MCF 10A (cell line): ENCODE measurements at regions of chr1 and their contacts with region 1.

Region 1: DNA sequence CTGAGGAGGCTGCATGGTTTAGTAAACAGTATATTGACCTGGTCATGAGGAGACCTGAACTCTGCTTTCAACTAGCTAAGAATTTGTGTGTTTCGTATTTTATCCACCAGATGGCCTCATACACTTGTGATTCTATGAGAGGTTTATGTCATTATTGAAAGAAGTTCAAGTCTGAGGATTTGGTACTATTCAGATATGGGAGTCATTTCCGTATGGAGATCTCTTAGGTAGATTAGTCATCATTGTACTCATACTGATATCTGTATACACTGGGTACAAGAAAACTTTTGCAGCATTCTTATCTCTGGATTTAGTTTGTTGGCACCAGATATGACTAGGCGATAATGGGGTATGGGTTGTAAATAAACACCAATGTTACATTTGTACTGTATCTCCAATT is 26.6 kb downstream of the ATF6 start:
- DNase-seq: peak; percentile 87
- H3K4me3 Mint-ChIP-seq: no peak overlapping the region
- H3K27ac Mint-ChIP-seq: no peak overlapping the region
- H3K4me1 Mint-ChIP-seq: peaks cover 18% of the 10 kb centered on the region
- H3K27me3 Mint-ChIP-seq: no peaks in the 10 kb centered on the region
- CTCF ChIP-seq: peak; percentile 71

Region 2: GRCh38 chr1:161781995-161782394 is 10.7 kb before region 1 on chr1:
- CTCF ChIA-PET with region 1: interaction called, 22 read pairs
- POLR2A ChIA-PET with region 1: interaction called, 5 read pairs
- intact Hi-C with region 1: no loop called
- DNase-seq: no peak
- H3K4me3 Mint-ChIP-seq: no peak overlapping the region
- H3K27ac Mint-ChIP-seq: peak overlapping the region; percentile 3
- H3K4me1 Mint-ChIP-seq: no peaks in the 10 kb centered on the region
- H3K27me3 Mint-ChIP-seq: no peaks in the 10 kb centered on the region
- CTCF ChIP-seq: no peak

Region 3: DNA sequence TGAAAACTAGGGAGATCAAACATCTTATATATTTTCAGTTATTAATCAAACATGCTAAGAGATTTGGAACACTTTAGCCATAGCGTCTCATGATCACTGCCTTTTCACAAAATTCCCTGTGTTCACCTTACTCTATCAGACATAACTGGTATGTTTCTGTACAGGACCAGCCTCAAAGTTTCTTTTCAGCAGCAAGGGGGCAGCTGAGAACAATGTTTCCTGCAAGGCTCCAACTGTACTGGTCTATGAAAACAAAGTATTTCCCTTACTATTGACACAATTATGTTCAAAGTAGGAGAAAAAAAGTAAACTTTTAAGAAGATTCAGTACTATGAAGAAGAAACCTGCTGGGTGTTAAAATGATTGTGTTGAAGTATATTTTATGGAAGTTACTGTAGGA is 71.8 kb after region 1 on chr1:
- CTCF ChIA-PET with region 1: interaction called, 12 read pairs
- POLR2A ChIA-PET with region 1: no interaction called
- intact Hi-C with region 1: no loop called
- DNase-seq: peak; percentile 38
- H3K4me3 Mint-ChIP-seq: no peak overlapping the region
- H3K27ac Mint-ChIP-seq: no peak overlapping the region
- H3K4me1 Mint-ChIP-seq: no peaks in the 10 kb centered on the region
- H3K27me3 Mint-ChIP-seq: no peaks in the 10 kb centered on the region
- CTCF ChIP-seq: peak; percentile 14

Region 4: DNA sequence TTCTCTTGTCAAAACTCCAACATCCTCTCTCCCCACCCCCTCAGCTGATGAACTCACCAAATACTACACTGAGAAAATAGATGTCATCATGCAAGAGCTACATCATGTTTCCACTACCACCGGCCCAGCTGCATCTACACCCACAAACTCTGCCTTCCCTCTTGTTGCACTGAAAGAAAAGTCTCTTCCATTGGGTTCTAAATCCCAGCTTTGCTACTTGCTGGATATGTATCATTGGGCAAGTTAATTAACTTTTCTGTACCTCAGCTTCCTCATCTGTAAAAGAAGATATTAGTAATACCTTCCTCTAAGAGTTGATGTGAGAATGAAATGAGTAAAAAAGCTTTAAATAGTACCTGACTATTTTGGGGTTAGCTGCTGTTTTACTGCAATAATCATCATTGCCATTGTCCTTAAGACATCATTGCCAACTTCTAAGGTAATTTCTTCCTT is 122.3 kb after region 1 on chr1:
- CTCF ChIA-PET with region 1: interaction called, 14 read pairs
- POLR2A ChIA-PET with region 1: no interaction called
- intact Hi-C with region 1: no loop called
- DNase-seq: no peak
- H3K4me3 Mint-ChIP-seq: no peak overlapping the region
- H3K27ac Mint-ChIP-seq: no peak overlapping the region
- H3K4me1 Mint-ChIP-seq: peaks cover 9% of the 10 kb centered on the region
- H3K27me3 Mint-ChIP-seq: no peaks in the 10 kb centered on the region
- CTCF ChIP-seq: no peak

Region 5: DNA sequence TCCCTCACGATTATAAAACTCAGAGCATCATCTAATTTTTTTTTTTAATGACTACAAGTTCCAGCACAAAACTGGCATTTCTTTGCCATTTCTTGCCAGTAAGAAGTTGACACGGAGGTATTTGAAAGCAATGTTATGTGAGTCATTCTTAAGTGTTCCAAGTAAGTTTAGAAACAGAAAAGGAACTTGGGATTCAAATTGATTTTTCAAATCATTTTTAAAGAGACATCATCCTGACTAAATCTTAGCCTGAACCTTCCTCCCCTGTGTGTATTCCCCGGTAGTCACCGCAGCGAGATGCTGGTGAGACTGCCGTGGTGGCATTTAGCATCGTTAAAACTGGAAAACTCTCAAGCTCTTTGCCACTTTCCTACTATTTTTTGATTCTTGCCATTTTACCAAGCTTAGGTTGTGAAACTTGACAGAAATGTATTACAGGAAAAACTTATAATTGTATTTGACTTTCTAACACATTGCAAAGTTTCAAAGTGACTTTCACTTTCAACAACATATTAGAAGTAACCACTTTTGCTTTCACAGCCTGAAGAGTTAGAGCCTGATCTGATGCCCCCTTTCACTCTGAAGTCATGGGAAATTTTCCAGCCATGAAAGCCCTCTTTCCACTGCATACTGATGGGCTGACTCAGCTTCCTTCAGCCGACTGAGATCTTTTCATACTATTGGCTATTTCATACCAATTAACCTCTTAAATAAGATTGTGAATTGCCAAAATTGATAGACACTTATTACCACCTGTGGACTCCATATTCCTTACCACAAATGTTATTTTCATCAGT is 169.5 kb after region 1 on chr1:
- CTCF ChIA-PET with region 1: interaction called, 18 read pairs
- POLR2A ChIA-PET with region 1: no interaction called
- intact Hi-C with region 1: loop called (anchors 5 kb)
- DNase-seq: peak; percentile 71
- H3K4me3 Mint-ChIP-seq: peak overlapping the region; percentile 69
- H3K27ac Mint-ChIP-seq: peak overlapping the region; percentile 40
- H3K4me1 Mint-ChIP-seq: peaks cover 33% of the 10 kb centered on the region
- H3K27me3 Mint-ChIP-seq: no peaks in the 10 kb centered on the region
- CTCF ChIP-seq: no peak

Region 6: DNA sequence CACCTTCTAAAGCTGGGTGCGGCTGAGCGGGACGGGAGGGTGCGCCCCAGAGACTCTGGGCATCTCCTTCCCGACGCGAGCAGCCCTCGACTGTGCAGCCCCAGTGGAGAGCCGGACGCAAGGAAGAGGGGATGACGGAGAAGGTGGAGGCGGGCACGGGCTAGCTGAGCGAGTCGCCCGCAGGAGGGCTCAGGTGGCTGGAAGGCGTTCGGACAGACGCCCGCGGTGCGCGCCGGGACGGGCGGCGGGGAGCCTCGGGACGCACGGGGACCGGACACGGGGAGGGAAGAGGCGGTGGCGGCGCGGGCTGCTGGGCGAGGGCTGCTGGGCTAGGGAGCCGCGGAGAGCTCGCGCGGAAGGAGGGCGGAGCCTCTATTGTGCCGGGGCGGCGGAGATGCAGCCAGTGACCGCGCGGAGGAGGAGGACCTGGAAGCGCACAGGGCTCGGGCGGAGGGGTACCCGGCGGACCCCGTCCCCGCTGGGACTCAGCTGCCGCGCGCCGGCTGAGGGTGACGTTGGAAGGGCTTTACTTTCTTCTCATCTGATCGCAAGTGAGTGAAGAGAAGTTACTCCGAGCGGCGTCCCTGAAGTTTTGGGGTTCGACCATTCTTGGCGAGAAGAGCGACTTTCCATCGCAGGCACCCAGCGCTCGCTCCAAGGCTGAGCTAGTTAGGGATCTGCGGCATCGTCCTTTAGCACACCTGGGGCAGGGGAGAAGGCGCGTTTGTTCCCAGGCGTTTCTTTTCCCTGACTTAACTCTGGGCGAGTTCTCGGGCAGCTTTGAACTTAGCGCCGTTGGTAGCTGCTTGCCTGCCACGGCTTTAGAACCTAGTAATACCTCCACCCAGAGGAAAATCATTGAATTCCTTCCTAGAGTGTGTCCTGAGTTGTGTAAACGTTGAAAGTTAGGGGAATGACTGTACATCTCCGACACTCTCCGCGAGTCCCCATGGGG is 231.1 kb after region 1 on chr1 and contains the start of gene OLFML2B:
- CTCF ChIA-PET with region 1: interaction called, 83 read pairs
- POLR2A ChIA-PET with region 1: interaction called, 17 read pairs
- intact Hi-C with region 1: loop called (anchors 1 kb)
- DNase-seq: peak; percentile 86
- H3K4me3 Mint-ChIP-seq: peak within 1 kb of the TSS; percentile 89
- H3K27ac Mint-ChIP-seq: peak within 1 kb of the TSS; percentile 65
- H3K4me1 Mint-ChIP-seq: peaks cover 15% of the 10 kb centered on the region
- H3K27me3 Mint-ChIP-seq: peaks cover 34% of the 10 kb centered on the region
- CTCF ChIP-seq: peak; percentile 45
- total RNA-seq, gene OLFML2B: not detected in 2 replicates

Region 7: GRCh38 chr1:162276493-162276892 is 483.8 kb after region 1 on chr1:
- CTCF ChIA-PET with region 1: interaction called, 24 read pairs
- POLR2A ChIA-PET with region 1: no interaction called
- intact Hi-C with region 1: loop called (anchors 1 kb)
- DNase-seq: peak; percentile 66
- H3K4me3 Mint-ChIP-seq: no peak overlapping the region
- H3K27ac Mint-ChIP-seq: no peak overlapping the region
- H3K4me1 Mint-ChIP-seq: peaks cover 7% of the 10 kb centered on the region
- H3K27me3 Mint-ChIP-seq: no peaks in the 10 kb centered on the region
- CTCF ChIP-seq: peak; percentile 64